Activated naive CD4-positive, alpha-beta T cell treated with anti-CD3 and anti-CD28 coated beads for 36 hours (primary cell): ENCODE measurements at regions of chr7 and their contacts with region 1.

Region 1: DNA sequence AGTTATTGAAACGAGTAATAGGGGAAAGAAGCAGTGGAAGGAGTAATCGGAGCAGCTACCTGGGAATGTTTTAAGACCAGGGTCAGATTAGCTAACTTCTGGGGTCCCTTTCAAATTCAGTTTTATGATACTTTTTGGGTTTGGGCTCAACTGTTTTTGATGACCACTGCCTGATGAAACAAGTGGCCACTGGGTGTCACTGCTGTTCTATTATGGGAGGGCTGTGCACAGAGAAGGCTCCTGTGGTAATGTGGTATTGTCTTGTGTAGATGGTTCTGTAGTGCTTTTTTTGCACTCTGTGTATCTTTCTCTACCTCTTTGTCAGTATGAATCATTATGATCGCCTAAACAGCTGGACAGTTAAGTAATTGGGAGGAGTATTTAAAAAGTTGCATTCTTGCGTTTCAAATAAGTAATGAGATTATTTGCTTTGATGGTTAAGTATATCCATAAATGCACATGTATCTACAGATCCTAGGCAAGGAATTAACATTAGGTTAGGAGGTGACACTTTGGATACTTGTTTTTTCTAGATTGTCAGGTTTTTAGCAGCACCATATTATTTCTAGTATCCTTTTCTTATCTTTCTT is 128.4 kb downstream of the ABCA13 start:
- DNase-seq: peak; percentile 75
- H3K4me3 Mint-ChIP-seq: no peak overlapping the region
- H3K27ac Mint-ChIP-seq: no peak overlapping the region
- H3K4me1 Mint-ChIP-seq: peaks cover 4% of the 10 kb centered on the region
- H3K27me3 Mint-ChIP-seq: peaks cover 8% of the 10 kb centered on the region

Region 2: DNA sequence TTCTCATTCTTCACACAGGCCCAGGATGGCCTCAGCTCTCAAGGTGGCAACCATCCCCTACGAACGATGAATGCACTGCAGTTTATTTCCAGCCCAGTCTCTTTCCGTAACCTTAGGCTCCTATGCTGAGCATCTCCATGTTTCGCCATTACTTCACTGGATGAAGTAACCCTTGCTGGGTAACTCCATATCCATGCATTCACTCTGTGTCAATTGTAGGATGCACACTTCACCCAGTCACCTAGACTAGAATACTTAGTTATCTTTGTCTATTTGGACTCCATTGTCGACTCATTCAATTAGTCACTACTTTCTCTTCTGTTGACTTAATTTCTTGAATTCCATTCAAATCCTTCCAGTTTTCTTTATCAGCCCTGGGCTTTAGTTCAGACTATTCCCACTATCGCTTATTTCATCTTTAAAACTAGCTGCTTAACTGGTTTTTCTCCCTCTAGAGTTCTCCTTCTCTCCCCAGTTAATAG is 606.5 kb before region 1 on chr7:
- CTCF ChIA-PET with region 1: no interaction called
- intact Hi-C with region 1: no loop called
- DNase-seq: no peak
- H3K4me3 Mint-ChIP-seq: no peak overlapping the region
- H3K27ac Mint-ChIP-seq: no peak overlapping the region
- H3K4me1 Mint-ChIP-seq: no peaks in the 10 kb centered on the region
- H3K27me3 Mint-ChIP-seq: no peaks in the 10 kb centered on the region

Region 3: DNA sequence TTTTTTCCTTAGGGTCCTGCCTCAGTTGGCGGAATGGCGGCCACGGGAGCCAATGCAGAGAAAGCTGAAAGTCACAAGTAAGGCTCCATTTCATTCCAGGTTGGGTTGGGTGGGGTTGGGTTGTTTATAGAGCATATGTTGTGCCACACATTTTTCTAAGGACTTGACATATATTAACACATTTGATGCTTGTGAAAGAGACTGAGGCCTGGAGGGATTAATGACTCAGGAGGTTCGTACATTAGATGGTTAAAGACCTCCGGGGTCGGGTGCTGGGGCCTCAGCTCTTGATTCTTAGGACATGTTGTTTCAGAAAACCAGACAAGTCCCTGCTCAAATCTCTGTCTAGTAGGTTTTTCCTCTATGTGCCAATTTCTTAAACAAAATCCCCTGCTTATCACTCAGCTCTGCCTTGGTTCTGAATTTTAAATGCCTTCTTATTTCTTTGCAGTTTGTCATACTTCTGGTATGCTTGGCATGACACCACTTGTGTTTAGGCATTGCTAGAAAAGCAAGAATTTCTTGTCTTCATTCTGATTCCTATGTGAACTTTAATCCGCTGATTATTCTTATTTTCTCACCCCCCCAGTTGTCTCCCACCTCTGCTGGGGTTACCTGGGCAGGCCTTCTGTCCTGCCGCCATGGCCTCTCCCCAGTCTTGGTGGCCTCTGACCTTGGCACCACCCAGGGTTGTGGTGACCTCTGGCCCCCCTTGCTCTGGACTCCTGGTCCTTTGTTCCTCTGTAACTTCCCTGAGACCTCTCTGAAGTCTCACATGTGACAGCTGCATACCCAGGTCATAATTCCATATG is 204.7 kb before region 1 on chr7:
- CTCF ChIA-PET with region 1: no interaction called
- intact Hi-C with region 1: loop called (anchors 2 kb)
- DNase-seq: no peak
- H3K4me3 Mint-ChIP-seq: no peak overlapping the region
- H3K27ac Mint-ChIP-seq: peak overlapping the region; percentile 94
- H3K4me1 Mint-ChIP-seq: peaks cover 84% of the 10 kb centered on the region
- H3K27me3 Mint-ChIP-seq: no peaks in the 10 kb centered on the region

Region 4: DNA sequence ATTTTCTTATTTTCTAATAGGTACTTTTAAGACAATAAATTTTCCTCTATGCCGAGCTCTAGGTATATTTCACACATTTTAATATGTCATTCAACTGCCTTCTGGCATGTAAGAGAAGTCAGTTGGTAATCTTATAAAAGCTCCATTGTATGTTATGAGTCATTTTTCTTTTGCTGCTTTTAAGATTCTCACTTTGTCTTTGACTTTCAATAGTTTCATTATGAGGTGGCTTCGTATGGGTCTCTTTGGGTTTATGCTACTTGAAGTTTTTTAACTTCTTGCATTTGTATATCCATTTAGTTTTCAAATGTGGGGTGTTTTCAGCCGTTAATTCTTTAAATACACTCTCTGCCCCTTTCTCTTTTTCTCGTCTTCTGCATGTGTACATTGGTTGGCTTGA is 47.9 kb before region 1 on chr7:
- CTCF ChIA-PET with region 1: interaction called, 4 read pairs
- intact Hi-C with region 1: loop called (anchors 1 kb)
- DNase-seq: no peak
- H3K4me3 Mint-ChIP-seq: no peak overlapping the region
- H3K27ac Mint-ChIP-seq: no peak overlapping the region
- H3K4me1 Mint-ChIP-seq: peaks cover 10% of the 10 kb centered on the region
- H3K27me3 Mint-ChIP-seq: peaks cover 7% of the 10 kb centered on the region

Region 5: GRCh38 chr7:49166441-49166840 is 866.8 kb after region 1 on chr7:
- CTCF ChIA-PET with region 1: no interaction called
- intact Hi-C with region 1: loop called (anchors 1 kb)
- DNase-seq: no peak
- H3K4me3 Mint-ChIP-seq: no peak overlapping the region
- H3K27ac Mint-ChIP-seq: no peak overlapping the region
- H3K4me1 Mint-ChIP-seq: no peaks in the 10 kb centered on the region
- H3K27me3 Mint-ChIP-seq: no peaks in the 10 kb centered on the region

Region 6: DNA sequence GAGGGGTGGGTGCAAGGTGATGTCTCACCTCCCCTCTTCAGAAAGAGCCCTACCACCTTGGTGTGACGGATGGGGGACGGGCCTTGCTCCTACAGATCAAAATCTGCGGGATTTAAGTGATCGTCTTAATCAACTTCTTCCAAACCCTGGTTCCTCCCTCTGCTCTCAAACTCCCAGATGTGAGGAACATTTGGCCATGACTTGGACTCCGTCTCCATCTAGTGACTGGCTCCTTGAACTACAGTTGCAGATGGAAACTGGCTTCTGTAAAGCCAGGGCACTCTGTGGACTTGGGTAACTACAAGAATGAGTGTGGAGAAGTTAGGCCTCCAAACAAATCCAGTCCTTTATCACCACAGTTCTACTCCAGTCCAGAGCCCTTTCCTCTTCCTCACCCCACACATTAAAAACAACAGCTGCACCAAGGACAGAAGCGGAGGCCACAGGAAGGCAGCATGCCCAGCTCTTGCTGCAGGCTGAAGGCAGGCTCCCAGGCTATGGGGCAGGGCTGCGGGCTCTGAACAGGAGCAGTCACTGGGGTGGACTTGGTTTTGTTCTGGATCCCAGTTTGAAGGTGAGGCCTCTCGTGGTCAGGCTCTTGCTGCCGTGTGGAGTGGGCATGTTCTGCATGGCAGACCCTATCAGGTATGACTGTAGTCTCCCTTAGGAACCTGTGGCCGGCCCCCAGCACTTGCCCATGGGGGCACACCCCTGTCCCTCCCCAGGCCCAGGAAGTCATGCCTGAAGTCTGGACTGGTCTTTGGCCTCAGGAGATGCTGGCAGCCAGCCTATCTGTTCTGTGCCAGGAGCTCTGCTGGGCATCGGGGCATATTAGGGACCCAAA is 1553.2 kb after region 1 on chr7:
- CTCF ChIA-PET with region 1: no interaction called
- intact Hi-C with region 1: loop called (anchors 1 kb)
- DNase-seq: peak; percentile 46
- H3K4me3 Mint-ChIP-seq: no peak overlapping the region
- H3K27ac Mint-ChIP-seq: no peak overlapping the region
- H3K4me1 Mint-ChIP-seq: no peaks in the 10 kb centered on the region
- H3K27me3 Mint-ChIP-seq: no peaks in the 10 kb centered on the region